ENCODE measurements at regions of chr13 and their contacts with region 1.

Region 1: DNA sequence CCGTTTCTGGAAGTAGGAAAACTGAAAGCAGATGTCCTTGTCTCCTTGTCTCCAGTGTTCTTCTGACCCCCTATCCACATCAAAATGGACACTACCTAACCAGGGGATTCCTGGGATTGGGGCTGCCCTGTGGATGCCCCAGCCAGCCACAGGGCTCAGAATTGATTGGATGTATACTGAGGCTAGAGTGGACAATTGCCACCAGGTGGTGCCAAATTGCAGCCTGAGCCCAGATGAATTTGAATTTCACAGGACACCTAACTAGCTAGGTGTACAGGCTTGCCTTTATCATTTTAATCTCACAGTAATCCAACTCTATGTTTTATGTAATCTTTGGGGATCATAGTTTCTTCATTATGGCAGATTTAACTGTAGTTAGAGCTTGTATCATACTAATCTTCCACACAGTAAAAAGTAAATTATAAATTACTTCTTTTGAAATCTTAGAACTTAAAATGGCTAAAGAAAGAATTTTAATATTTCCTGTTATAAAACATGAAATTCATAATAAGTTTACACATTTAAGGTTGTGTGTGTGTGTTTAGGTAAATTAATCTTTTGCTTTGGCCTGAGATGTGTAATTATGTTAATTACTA is 58.0 kb downstream of the PIBF1 start:
- DNase-seq: peak; percentile 69
- H3K4me3 ChIP-seq: no peak overlapping the region
- H3K27ac ChIP-seq: peak overlapping the region; percentile 26
- H3K4me1 ChIP-seq: no peaks in the 10 kb centered on the region
- H3K27me3 ChIP-seq: no peaks in the 10 kb centered on the region
- CTCF ChIP-seq: peak; percentile 79 to 86

Region 2: DNA sequence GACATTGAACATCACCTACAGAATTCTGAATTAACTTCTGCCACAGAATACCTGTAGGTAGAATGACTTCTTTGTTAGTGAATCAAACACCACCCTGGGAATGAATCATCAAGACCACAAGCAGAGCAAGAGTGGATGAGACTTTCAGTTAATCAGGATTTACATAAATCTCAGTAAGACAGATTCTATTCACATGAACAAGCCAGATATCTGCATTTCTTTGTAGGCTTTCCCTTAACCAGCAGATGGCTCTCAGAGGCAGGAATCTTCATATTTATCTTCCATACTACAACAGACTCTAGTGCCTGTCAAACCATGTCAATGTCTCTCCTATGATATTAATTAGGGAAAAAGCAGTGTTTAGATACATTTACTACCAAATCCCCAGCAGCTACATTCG is 882.2 kb after region 1 on chr13:
- CTCF ChIA-PET with region 1: no interaction called
- dilution Hi-C with region 1: no loop called
- in situ Hi-C with region 1: no loop called
- intact Hi-C with region 1: loop called (anchors 5 kb)
- DNase-seq: peak; percentile 94
- H3K4me3 ChIP-seq: no peak overlapping the region
- H3K27ac ChIP-seq: peak overlapping the region; percentile 80
- H3K4me1 ChIP-seq: peaks cover 33% of the 10 kb centered on the region
- H3K27me3 ChIP-seq: no peaks in the 10 kb centered on the region
- CTCF ChIP-seq: peak; percentile 43 to 56